Calu3 (cell line): ENCODE measurements at regions of chr7 and their contacts with region 1.

Region 1: DNA sequence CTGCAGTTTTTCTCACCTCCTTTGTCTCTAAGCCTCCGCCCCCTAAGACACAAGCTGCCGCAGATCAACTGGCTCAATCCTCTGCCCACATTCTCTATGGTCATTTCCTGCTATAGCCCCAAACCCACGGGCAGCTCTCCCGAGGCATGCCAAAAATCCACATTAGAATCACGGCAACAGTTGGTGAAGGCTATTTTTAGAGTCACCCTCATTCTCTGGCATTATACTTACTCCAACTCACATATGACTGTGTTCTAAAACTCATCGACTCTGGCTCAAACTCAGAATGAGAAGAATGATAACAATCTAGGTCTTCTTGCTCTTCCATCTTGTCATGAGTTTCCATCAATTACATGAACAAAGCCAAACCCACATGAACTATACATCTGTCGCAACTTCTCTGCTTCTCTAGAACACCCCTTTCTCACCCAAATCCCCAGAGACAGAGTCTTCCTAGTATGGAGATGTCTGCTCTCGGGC is 10.9 kb upstream of the KIAA1549 start:
- DNase-seq: no peak
- H3K4me3 Mint-ChIP-seq: no peak overlapping the region
- H3K27ac Mint-ChIP-seq: no peak overlapping the region
- H3K4me1 Mint-ChIP-seq: no peaks in the 10 kb centered on the region
- H3K27me3 Mint-ChIP-seq: peaks cover 18% of the 10 kb centered on the region
- CTCF ChIP-seq: no peak

Region 2: GRCh38 chr7:138654616-138655015 is 337.5 kb before region 1 on chr7:
- CTCF ChIA-PET with region 1: no interaction called
- intact Hi-C with region 1: no loop called
- DNase-seq: no peak
- H3K4me3 Mint-ChIP-seq: no peak overlapping the region
- H3K27ac Mint-ChIP-seq: no peak overlapping the region
- H3K4me1 Mint-ChIP-seq: peaks cover 9% of the 10 kb centered on the region
- H3K27me3 Mint-ChIP-seq: no peaks in the 10 kb centered on the region
- CTCF ChIP-seq: no peak

Region 3: DNA sequence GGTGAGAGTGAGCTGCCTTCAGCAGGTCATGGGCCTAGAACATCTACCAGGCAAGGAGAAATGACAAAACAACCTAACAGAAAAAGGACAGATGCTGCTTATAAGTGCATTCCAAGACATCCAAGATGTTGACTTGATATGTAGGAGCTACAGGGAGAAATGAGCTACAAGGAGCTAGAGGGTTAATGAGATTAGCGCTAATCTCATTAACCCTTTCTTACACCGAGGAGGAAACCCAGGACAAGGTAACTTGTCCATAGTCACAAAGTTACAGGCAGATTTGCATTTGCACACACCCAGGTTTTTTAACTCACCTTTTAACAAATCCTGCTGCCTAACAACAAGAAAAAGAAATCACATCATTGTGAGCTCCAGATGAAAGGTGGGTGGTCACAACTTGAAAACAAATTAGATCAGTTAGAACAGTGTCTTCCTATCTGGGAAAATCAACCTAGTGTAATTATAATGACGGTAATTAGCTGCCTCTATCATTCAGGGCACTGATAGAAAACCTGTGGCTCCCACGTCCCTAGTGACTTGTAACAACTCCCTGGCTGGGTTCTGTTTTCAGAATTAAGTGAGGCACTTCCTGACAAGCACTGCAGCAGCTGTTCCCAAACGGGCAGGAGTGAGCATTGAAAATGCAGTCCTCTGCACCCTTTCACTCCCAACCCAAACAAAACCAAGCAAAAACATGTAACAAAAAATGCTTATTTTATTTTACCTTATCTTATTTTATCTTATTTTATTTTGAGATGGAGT is 16.6 kb before region 1 on chr7:
- CTCF ChIA-PET with region 1: no interaction called
- intact Hi-C with region 1: no loop called
- DNase-seq: no peak
- H3K4me3 Mint-ChIP-seq: no peak overlapping the region
- H3K27ac Mint-ChIP-seq: no peak overlapping the region
- H3K4me1 Mint-ChIP-seq: peaks cover 22% of the 10 kb centered on the region
- H3K27me3 Mint-ChIP-seq: no peaks in the 10 kb centered on the region
- CTCF ChIP-seq: no peak

Region 4: GRCh38 chr7:139382439-139382838 is 390.3 kb after region 1 on chr7:
- CTCF ChIA-PET with region 1: interaction called, 11 read pairs
- intact Hi-C with region 1: no loop called
- DNase-seq: no peak
- H3K4me3 Mint-ChIP-seq: no peak overlapping the region
- H3K27ac Mint-ChIP-seq: no peak overlapping the region
- H3K4me1 Mint-ChIP-seq: no peaks in the 10 kb centered on the region
- H3K27me3 Mint-ChIP-seq: no peaks in the 10 kb centered on the region
- CTCF ChIP-seq: no peak